AG04450 (cell line): ENCODE measurements at regions of chr17 and their contacts with region 1.

Region 1: DNA sequence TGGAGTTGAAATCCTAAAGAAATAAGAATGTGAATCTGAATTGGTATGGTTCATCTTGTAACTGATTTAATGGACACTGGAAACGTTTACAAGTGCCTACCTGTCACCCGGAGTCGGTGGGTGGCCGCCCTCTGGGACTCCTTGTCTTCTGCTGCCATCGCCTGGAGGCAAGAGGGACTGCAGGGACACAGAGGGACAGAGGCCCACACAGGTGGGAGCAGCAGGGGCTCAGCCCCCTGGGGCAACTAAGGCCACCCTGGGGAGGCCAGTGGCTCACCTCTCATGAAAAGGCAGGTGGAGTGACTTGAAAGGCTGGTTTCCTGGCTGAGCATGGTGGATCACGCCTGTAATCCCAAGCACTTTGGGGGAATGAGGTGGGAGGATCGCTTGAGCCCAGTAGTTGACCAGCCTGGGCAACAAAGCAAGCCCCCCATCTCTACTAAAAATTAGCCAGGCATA is 23.2 kb downstream of the TMEM92 start:
- DNase-seq: no peak
- H3K4me3 ChIP-seq: no peak overlapping the region
- H3K27ac ChIP-seq: no peak overlapping the region
- H3K27me3 ChIP-seq: no peaks in the 10 kb centered on the region
- CTCF ChIP-seq: peak; percentile 82

Region 2: GRCh38 chr17:50114849-50115357 is 182.5 kb before region 1 on chr17:
- CTCF ChIA-PET with region 1: interaction called, 11 read pairs
- POLR2A ChIA-PET with region 1: interaction called, 3 read pairs
- DNase-seq: no peak
- H3K4me3 ChIP-seq: no peak overlapping the region
- H3K27ac ChIP-seq: no peak overlapping the region
- H3K27me3 ChIP-seq: peaks cover 3% of the 10 kb centered on the region
- CTCF ChIP-seq: peak; percentile 76

Region 3: GRCh38 chr17:50169121-50169764 is 128.2 kb before region 1 on chr17:
- CTCF ChIA-PET with region 1: interaction called, 116 read pairs
- POLR2A ChIA-PET with region 1: interaction called, 9 read pairs
- DNase-seq: no peak
- H3K4me3 ChIP-seq: no peak overlapping the region
- H3K27ac ChIP-seq: no peak overlapping the region
- H3K27me3 ChIP-seq: no peaks in the 10 kb centered on the region
- CTCF ChIP-seq: peak; percentile 98

Region 4: DNA sequence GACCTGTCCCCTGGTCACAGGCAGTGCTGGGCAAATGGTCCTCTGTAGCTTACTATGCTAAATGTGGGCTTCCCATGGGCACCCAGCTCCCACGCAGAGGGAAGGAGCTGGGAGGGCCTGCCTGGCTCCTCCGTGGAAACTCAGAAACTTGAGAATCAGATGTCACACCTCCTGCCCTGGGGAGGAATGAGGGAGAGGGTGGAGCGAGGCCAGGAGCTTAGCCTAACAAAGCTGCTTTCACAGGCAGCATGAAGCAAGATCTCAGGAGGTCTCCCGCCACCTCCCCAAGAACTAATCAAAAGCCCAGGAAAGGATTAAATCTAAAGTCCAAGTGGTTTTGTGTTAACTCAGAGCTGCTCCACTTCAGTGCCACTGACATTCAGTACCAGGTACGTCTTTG is 14.9 kb after region 1 on chr17:
- CTCF ChIA-PET with region 1: interaction called, 11 read pairs
- POLR2A ChIA-PET with region 1: no interaction called
- DNase-seq: no peak
- H3K4me3 ChIP-seq: no peak overlapping the region
- H3K27ac ChIP-seq: no peak overlapping the region
- H3K27me3 ChIP-seq: peaks cover 4% of the 10 kb centered on the region
- CTCF ChIP-seq: no peak

Region 5: GRCh38 chr17:50380369-50381259 is 83.2 kb after region 1 on chr17:
- CTCF ChIA-PET with region 1: no interaction called
- POLR2A ChIA-PET with region 1: no interaction called
- DNase-seq: no peak
- H3K4me3 ChIP-seq: no peak overlapping the region
- H3K27ac ChIP-seq: no peak overlapping the region
- H3K27me3 ChIP-seq: no peaks in the 10 kb centered on the region
- CTCF ChIP-seq: no peak